HAP-1 (cell line): ENCODE measurements at regions of chr22 and their contacts with region 1.

Region 1: DNA sequence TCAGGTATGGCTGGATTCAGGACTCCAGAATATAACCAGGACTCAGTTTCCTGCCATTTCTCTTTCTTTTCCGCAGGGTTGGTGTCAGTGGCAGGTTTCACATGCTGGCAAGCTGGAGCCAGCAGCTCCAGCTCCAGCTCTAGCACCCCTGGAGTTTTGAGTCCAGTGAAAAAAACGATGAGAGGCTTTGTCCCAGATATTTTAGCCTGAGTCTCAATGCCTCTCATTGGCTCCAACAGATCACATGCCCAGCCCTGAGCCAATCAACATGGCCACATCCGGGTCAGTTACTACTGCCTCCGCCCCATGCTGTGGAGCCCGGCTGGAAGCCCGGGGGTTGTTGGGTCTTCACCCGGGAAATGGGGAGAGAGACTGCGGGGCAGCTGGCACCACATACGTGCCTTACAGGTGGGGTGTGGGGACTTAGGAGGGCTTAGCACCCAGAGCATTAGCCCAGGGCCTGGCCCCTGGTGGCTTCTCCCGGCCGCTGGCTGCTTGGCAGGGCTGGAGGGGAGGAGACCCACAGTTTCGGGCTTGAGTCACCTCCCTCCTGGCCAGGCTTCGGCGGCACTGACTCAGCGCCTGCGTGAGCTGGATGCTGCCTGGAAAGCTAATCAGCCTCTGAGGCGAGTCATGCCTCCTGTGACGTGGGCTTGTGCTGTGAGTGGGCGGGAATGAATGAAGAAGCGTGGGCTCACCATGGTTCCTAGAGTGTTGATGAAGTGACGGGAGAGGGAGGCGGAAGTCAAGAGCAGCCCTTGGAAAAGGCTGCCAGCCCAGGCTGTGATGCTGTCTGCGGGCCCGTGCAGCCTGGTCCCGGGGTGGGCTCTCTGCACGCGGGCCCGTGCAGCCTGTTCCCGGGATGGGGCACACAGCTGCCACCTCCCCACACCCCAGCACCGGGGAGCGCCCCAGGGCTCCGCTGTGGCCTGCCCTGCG is 15.3 kb upstream of the MRTFA start:
- DNase-seq: peak; percentile 94 to 95
- H3K4me3 ChIP-seq: peak overlapping the region; percentile 63
- H3K4me1 ChIP-seq: peaks cover 12% of the 10 kb centered on the region
- H3K27me3 ChIP-seq: no peaks in the 10 kb centered on the region

Region 2: GRCh38 chr22:40177738-40178416 is 474.0 kb before region 1 on chr22 and contains the start of gene TNRC6B:
- in situ Hi-C with region 1: no loop called
- DNase-seq: peak; percentile 86 to 100
- H3K4me3 ChIP-seq: peak within 1 kb of the TSS; percentile 52
- H3K4me1 ChIP-seq: peaks cover 42% of the 10 kb centered on the region
- H3K27me3 ChIP-seq: no peaks in the 10 kb centered on the region

Region 3: GRCh38 chr22:40258451-40259046 is 393.3 kb before region 1 on chr22:
- in situ Hi-C with region 1: no loop called
- DNase-seq: no peak
- H3K4me3 ChIP-seq: no peak overlapping the region
- H3K4me1 ChIP-seq: no peaks in the 10 kb centered on the region
- H3K27me3 ChIP-seq: no peaks in the 10 kb centered on the region

Region 4: DNA sequence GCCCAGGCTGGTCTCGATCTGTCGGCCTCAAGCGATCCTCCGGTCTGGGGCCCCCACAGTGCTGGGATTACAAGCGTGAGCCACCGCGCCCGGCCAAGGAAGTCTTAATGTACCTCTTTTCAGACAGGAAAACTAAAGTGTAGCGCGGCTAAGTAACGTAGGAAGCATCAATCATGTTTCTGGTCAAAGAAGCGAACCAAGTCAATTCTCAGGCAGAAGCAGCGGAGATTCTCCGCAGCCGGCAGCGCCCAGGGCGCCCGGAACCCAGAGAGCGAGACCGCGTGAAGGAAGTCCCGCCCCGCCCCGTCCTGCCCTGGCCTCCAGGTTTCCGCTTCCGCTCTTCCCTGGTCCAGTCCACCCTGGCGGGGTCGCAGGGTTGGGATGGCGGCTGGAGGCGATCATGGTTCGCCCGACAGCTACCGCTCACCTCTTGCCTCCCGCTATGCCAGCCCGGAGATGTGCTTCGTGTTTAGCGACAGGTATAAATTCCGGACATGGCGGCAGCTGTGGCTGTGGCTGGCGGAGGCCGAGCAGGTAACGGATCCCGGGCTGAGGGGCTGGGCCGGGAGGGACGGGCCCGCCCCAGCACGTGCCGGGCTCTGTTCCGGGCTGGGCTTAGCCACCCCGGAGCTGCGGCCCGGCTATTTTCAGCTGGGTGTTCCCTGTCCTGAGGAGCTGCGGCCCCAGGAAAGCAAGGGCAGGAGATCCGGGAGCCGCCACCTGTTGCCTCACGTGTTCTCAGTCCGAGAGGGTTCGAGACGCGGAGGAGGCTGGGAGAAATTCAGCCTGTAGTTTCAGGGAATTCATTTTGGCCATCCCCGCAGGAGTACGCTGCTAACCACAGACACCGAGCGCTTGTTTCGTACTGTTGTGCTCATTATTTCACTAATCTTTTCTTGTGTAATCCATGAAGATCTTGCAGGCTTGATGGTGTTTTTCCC is 305.4 kb before region 1 on chr22 and contains the start of gene ADSL:
- in situ Hi-C with region 1: no loop called
- DNase-seq: peak; percentile 87 to 94
- H3K4me3 ChIP-seq: peak within 1 kb of the TSS; percentile 93
- H3K4me1 ChIP-seq: peaks cover 4% of the 10 kb centered on the region; the same call in 1 of the 2 replicates
- H3K27me3 ChIP-seq: no peaks in the 10 kb centered on the region

Region 5: GRCh38 chr22:40432157-40432556 is 219.7 kb before region 1 on chr22:
- in situ Hi-C with region 1: loop called (anchors 5 kb)
- DNase-seq: no peak
- H3K4me3 ChIP-seq: no peak overlapping the region
- H3K4me1 ChIP-seq: no peaks in the 10 kb centered on the region
- H3K27me3 ChIP-seq: no peaks in the 10 kb centered on the region

Region 6: DNA sequence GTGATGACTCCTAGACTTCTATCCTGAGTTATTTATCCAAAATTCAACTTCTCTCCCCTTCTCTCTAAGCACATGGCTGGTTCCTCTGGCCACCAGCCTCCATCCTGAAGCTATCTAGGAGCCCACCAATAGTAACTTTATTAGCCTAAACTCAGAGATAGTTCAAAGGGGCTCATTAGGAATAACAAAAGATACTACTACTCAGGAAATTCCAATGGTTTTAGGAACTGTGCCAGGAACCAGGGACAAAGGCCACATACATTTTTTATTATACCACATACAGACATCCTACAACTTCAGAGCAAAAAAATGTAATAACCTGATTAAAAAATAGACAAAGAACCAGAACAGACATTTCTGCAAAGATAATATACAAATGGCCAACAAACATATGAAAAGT is 139.4 kb after region 1 on chr22:
- in situ Hi-C with region 1: no loop called
- DNase-seq: peak; percentile 66 to 85
- H3K4me3 ChIP-seq: no peak overlapping the region
- H3K4me1 ChIP-seq: peaks cover 13% of the 10 kb centered on the region
- H3K27me3 ChIP-seq: no peaks in the 10 kb centered on the region